Activated CD4-positive, alpha-beta memory T cell treated with anti-CD3 and anti-CD28 coated beads for 36 hours (primary cell): ENCODE measurements at regions of chr15 and their contacts with region 1.

Region 1: DNA sequence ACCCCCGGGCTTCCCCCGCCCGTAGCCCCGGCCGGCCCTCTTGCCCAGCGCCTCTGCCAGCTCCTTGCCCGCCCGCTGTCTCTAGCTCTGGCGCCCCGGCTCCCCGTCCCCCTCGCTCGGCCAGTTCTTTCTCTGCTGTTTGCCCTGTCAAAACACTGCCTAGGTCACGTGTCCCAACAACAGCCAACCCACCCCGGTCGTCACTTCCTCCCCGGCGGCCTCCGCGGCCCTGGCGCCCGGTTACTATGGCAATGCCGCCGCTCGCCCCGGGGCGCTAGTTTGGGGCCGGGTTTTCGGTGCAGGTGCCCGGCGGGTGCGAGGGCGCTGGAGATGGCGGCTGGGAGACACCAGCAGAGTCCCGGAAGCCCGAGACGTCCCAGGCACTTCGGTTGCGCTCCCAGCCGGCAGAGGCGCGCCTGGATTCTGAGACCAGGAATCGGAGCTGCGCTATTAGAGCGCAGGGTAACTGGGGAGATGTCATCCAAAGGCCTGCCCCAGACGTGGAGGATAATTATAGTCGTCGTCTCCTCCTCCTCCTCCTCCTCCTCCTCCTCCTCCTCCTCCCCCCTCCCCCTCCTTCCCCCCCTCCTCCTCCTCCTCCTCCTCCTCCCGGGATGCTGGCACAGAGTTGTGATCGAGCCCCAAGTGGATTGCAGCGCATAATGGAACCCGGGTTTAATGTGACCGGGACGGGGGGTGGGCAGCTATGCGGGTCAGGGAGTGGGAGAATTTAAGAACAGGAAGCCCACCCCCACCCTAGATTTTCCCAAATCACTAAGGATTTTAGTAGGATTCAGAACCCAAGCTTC is at the start of gene ATOSA:
- DNase-seq: peak; percentile 95
- H3K4me3 Mint-ChIP-seq: peak within 1 kb of the TSS; percentile 100
- H3K27ac Mint-ChIP-seq: peak within 1 kb of the TSS; percentile 97
- H3K4me1 Mint-ChIP-seq: peaks cover 47% of the 10 kb centered on the region
- H3K27me3 Mint-ChIP-seq: no peaks in the 10 kb centered on the region
- total RNA-seq, gene ATOSA: 18.2 to 19.3 TPM

Region 2: DNA sequence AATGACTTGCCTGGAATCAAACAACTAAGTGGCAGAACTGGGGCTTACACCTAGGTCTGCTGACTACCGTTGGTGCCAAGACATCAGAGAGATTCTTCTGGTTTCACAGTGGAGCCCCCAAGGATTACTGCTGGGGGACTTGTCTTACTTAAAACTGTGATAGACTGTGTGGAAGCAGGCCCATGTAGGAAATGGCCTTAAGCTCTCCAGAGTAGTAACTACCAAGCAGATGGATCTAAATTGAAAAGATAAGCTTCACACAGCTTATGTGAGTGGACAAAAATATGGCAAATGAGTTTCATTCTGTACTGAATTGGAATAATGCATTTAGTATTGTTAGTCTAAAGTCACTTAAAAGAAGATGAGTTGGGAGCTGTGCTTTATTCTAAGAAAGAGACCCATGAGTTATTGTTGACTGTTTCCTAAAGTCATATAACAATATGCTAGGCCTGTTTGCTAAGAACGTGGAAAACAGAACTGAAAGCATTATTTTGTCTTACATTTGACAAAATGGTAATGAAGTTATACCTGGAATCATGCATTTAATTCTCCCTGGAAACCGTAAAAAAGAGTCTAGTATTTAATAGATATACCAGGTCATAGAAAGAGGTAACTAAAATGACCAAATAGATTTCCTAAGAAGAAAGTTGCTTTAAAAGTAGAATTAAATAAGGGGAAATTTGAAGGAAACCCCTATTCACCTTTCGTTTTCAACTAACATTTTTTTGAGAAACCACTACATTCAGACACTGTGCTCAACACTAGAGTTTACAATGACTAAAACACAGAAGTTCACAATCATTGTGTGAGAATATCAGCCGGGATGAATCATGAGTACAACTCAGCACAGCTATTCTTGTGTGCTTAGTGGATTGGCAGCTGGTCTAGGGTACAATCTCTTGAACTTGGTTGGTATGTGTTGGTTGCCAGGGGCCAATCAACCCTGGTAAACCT is 673.4 kb before region 1 on chr15:
- CTCF ChIA-PET with region 1: no interaction called
- POLR2A ChIA-PET with region 1: no interaction called
- intact Hi-C with region 1: loop called (anchors 5 kb)
- DNase-seq: peak; percentile 60
- H3K4me3 Mint-ChIP-seq: no peak overlapping the region
- H3K27ac Mint-ChIP-seq: peak overlapping the region; percentile 69
- H3K4me1 Mint-ChIP-seq: peaks cover 63% of the 10 kb centered on the region
- H3K27me3 Mint-ChIP-seq: no peaks in the 10 kb centered on the region

Region 3: DNA sequence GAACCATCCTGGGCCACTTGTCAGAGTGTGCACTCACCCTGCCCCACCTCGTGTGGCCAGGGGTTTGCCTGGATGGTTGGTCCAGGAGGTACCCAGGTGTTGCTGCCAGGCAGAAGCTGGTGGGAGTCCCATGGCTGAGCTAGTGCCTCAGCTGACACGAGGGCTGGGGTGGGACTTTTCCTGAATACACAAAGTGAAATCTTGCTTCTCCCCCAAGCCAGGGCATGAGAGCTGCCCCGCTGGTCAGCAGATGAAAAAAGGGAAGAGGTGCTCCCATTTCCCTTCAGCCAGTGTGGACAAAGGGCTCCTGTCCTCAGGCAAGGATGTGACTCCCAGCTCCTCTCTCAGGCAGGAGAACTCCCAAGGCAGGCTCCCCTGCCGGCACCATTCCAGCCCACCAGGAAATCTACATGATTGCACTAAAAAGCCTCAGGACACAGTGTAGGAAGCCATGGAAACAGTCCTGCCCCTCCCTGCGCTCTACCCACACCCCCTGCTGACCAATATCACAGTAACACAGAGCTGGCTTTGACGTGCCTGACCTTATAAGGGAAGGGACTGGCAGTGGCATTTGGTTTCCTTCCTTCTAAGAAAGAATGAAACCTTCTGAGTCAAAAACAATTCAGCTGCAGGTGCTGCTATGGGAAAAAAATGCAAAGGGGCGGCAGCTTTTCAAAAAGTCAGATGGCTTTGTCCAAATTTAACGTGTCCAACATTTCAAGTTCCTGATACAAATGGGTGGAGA is 417.8 kb before region 1 on chr15:
- CTCF ChIA-PET with region 1: interaction called, 4 read pairs
- POLR2A ChIA-PET with region 1: no interaction called
- intact Hi-C with region 1: loop called (anchors 1 kb)
- DNase-seq: peak; percentile 87
- H3K4me3 Mint-ChIP-seq: peak overlapping the region; percentile 32
- H3K27ac Mint-ChIP-seq: peak overlapping the region; percentile 80
- H3K4me1 Mint-ChIP-seq: peaks cover 36% of the 10 kb centered on the region
- H3K27me3 Mint-ChIP-seq: no peaks in the 10 kb centered on the region

Region 4: GRCh38 chr15:52466134-52466701 is 213.2 kb before region 1 on chr15:
- CTCF ChIA-PET with region 1: no interaction called
- POLR2A ChIA-PET with region 1: interaction called, 3 read pairs
- intact Hi-C with region 1: loop called (anchors 2 kb)
- DNase-seq: peak; percentile 84
- H3K4me3 Mint-ChIP-seq: no peak overlapping the region
- H3K27ac Mint-ChIP-seq: peak overlapping the region; percentile 73
- H3K4me1 Mint-ChIP-seq: peaks cover 46% of the 10 kb centered on the region
- H3K27me3 Mint-ChIP-seq: no peaks in the 10 kb centered on the region

Region 5: DNA sequence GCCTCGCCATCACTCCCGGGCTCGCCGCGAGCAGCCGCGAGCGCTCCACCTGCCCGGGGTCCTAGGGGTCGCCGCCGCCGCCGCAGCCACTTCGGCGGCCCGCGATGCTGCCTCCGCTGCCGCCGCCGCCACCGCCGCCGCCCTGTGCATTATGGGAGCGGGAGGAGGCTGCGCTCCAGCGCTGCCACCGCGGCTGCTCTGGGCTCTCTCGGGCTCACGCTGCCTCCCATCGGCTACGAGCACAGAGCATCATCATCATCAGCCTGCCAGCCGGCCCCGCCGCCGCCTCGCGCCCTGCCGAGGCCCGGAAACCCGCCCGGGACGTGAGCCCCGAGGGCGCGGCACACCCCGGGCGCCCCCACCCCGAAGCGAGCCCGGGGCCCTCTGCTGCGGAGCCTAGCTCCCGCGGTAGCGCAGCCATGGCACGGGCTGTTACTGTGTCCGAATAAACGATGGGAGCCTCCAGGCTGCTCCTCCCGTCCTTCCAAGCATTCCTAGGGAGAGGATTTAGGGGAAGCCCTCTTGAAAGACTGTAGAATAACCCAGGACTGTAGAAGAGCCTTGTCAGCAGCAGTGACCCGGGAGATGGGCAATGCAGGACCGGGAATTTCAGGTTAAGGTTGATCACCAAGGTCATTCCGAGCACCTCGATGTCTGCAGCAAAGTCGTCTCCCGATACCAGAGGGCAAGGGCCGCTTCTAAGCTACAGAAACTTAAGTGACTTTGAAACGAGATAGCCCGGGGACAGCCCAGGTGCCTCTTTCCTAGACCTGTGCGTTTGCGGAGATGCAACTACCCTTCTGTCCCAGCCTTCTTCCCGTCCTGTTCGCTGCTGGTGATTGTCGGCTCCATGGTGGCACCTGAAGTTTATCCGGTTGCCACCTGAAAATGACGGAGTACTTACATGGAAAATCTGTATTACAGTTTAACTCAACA is 150.2 kb before region 1 on chr15:
- CTCF ChIA-PET with region 1: no interaction called
- POLR2A ChIA-PET with region 1: interaction called, 6 read pairs
- intact Hi-C with region 1: loop called (anchors 1 kb)
- DNase-seq: peak; percentile 86
- H3K4me3 Mint-ChIP-seq: peak overlapping the region; percentile 78
- H3K27ac Mint-ChIP-seq: peak overlapping the region; percentile 75
- H3K4me1 Mint-ChIP-seq: peaks cover 33% of the 10 kb centered on the region
- H3K27me3 Mint-ChIP-seq: peaks cover 2% of the 10 kb centered on the region

Region 6: DNA sequence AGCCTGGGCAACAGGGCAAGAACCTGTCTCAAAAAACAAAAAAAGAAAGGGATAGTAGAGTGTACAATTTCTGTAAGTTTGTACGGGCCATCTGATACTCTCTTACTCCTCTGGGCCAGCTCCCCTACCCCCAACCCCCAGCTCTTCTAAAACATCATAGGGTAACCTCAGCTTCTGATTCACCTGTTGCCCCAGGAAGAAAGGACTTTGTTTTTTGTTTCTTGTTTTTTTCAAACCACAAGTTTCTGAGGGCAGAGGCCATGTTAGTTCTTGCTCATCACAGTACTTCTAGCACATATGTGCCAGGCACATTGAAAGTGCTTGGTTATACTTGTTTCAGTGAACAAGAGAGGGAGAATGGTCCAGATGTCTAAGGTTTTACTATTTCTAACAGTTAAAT is 20.5 kb before region 1 on chr15:
- CTCF ChIA-PET with region 1: interaction called, 7 read pairs
- POLR2A ChIA-PET with region 1: interaction called, 6 read pairs
- intact Hi-C with region 1: loop called (anchors 1 kb)
- DNase-seq: peak; percentile 64
- H3K4me3 Mint-ChIP-seq: no peak overlapping the region
- H3K27ac Mint-ChIP-seq: peak overlapping the region; percentile 12
- H3K4me1 Mint-ChIP-seq: peaks cover 30% of the 10 kb centered on the region
- H3K27me3 Mint-ChIP-seq: no peaks in the 10 kb centered on the region

Region 7: DNA sequence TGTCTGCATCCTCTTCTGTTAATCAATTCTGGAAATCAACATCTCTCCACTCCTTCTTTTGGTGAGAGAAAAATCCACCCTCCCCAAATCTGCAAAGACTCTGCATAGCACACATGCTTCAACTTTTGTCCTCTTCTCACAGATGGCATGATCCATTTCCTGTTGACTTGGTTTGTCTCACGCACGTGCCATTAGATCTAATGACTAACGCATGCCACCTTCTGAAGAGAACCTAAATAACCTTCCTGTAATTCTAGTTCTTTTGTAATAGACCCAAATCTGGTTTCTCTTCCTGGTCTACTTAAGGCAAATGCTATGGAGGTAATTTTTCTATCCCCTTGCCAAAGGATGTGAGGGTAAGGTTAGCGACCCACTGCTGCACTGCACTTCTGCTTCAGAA is 50.7 kb after region 1 on chr15:
- CTCF ChIA-PET with region 1: interaction called, 7 read pairs
- POLR2A ChIA-PET with region 1: no interaction called
- intact Hi-C with region 1: loop called (anchors 1 kb)
- DNase-seq: peak; percentile 53
- H3K4me3 Mint-ChIP-seq: no peak overlapping the region
- H3K27ac Mint-ChIP-seq: peak overlapping the region; percentile 43
- H3K4me1 Mint-ChIP-seq: peaks cover 36% of the 10 kb centered on the region
- H3K27me3 Mint-ChIP-seq: no peaks in the 10 kb centered on the region